HepG2 (cell line): ENCODE measurements at regions of chr11 and their contacts with region 1.

Region 1: DNA sequence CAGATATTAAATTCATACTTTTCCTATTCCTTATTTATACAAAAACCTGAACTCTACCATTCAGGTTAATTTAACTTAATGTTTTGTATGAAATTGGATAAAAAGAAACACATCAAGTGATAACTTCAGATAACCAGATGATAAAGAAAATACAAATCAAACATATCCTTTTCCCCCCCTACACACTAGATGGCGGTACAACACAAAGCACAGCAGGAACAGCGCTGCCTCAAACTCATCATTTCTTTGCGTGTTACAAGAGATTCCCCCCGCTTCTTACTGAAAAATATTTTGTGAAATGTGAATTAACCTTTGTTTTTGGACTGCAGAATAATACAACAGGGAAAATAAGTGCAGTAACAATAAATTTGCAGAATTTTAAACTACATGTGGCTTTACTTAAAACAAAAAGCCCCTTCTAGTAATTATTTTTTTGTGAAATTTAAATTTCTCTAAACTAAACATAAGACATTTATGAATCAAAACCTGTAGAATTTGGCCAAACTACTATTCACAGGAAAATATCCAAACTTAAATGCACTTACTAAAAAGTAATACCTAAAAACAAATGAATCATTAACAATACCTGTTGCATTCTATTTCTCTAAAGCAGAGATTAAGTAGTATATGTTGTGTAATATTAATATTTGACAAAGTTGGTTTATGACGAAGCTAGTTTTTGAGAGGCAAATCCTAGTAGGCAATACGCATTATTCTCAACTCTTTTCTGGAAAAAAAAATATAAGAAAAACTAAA is 74.4 kb downstream of the ARHGAP32 start:
- DNase-seq: peak; percentile 64
- ATAC-seq: peak; percentile 39; the same call in 1 of the 3 replicates
- H3K4me3 ChIP-seq: no peak overlapping the region
- H3K27ac ChIP-seq: no peak overlapping the region
- H3K4me1 ChIP-seq: peaks cover 40% of the 10 kb centered on the region
- H3K27me3 ChIP-seq: no peaks in the 10 kb centered on the region
- CTCF ChIP-seq: peak; percentile 87
- EP300 ChIP-seq: no peak
- POLR2A ChIP-seq: no peak
- RAD21 ChIP-seq: peak; percentile 83

Region 2: DNA sequence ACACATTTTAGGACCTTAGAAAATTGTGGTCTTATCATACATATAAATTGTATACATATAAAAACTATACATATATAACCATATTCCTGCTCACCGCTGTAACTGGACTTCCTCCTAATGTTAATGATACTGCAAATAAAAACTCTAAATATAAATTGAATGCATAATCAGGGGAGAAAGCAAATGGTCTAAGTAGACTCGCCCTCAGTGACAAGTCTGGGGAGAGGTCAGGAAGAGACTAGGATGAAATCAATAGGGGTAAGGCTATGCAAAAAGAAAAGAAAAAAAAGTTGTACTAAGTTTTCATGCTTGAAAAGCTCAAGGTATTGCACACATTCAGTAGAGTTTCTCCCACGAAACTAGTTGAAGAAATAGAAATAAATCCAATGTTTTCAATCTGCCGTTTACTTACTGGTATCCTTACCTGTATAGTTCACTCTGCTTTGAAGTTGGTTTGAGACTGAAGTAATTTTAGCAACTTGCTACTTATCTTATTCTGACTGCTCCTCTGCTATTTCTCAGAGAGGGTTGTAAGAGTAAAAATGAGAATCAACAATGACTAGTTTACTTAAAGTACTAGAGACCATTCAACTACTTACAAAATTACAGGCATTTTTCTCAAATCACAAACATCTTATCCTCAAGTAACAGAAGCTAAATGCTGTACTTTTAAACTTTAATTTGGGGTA is 86.5 kb after region 1 on chr11:
- CTCF ChIA-PET with region 1: no interaction called
- POLR2A ChIA-PET with region 1: no interaction called
- in situ Hi-C with region 1: no loop called
- intact Hi-C with region 1: loop called (anchors 5 kb)
- DNase-seq: no peak
- ATAC-seq: no peak
- H3K4me3 ChIP-seq: no peak overlapping the region
- H3K27ac ChIP-seq: no peak overlapping the region
- H3K4me1 ChIP-seq: peaks cover 16% of the 10 kb centered on the region
- H3K27me3 ChIP-seq: no peaks in the 10 kb centered on the region
- CTCF ChIP-seq: no peak
- EP300 ChIP-seq: no peak
- POLR2A ChIP-seq: no peak
- RAD21 ChIP-seq: no peak

Region 3: DNA sequence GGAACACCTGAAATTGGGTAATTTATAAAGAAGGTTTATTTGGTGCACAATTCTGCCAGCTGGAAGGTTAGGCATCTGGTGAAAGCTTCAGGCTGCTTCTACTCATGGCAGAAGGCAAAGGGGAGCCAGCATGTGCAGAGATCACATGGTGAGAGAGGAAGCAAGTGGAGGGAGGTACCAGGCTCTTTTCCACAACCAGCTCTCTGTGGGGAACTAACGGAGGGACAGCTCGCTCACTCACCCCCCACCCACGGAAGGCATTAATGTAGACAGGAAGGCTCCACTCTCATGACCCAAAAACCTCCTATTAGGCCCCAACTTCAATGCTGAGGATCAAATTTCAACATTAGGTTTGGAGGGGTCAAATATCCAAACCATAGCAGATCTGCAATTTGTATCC is 149.9 kb after region 1 on chr11:
- CTCF ChIA-PET with region 1: no interaction called
- POLR2A ChIA-PET with region 1: no interaction called
- in situ Hi-C with region 1: no loop called
- intact Hi-C with region 1: no loop called
- DNase-seq: no peak
- ATAC-seq: no peak
- H3K4me3 ChIP-seq: no peak overlapping the region
- H3K27ac ChIP-seq: no peak overlapping the region
- H3K4me1 ChIP-seq: peaks cover 28% of the 10 kb centered on the region
- H3K27me3 ChIP-seq: no peaks in the 10 kb centered on the region
- CTCF ChIP-seq: no peak
- EP300 ChIP-seq: no peak
- POLR2A ChIP-seq: no peak
- RAD21 ChIP-seq: no peak

Region 4: DNA sequence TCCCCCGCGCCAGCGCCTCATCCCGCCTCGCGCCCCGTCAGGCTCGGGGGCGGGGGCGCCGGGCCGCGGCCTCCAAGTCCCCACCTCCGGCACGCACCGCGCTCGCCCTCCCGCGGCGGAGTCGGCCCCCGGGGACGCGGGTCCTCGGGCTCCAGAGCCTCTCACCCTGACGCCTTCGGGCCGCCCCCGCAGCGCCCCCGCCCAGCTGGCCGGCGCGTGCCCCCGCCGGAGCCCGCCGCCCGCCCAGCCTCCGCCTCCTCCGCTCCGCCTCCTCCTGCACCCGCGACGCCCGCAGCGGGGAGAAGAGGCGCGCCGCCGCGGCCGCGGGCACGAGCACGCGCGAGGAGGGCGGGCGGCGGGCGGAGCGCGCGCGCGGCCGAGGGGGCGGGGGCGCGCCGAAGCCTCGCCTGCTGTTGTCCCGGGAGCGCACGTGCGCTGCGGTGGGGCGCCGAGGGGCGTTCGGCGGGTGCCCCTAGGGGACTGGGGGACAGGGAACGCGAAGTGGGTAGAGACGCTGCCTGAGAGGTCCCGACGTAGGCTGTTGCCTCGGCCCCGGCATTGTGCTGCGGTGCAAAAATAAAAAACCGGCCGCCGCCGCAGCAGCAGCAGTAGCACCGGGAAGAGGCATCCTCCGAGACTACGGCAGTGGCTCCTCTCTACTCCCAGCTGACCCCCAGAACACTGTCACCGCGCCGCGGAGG is 161.7 kb after region 1 on chr11:
- CTCF ChIA-PET with region 1: interaction called, 5 read pairs
- POLR2A ChIA-PET with region 1: no interaction called
- in situ Hi-C with region 1: no loop called
- intact Hi-C with region 1: loop called (anchors 2 kb)
- DNase-seq: peak; percentile 67
- ATAC-seq: peak; percentile 71
- H3K4me3 ChIP-seq: peak overlapping the region; percentile 76 to 82 (median 77)
- H3K27ac ChIP-seq: peak overlapping the region; percentile 21
- H3K4me1 ChIP-seq: peaks cover 81% of the 10 kb centered on the region
- H3K27me3 ChIP-seq: no peaks in the 10 kb centered on the region; a peak in 2 of 5 replicates
- CTCF ChIP-seq: peak; percentile 53; the same call in 1 of the 2 replicates
- EP300 ChIP-seq: no peak
- POLR2A ChIP-seq: peak; percentile 44 to 73; a peak in 3 of 4 replicates
- RAD21 ChIP-seq: peak; percentile 63

Region 5: DNA sequence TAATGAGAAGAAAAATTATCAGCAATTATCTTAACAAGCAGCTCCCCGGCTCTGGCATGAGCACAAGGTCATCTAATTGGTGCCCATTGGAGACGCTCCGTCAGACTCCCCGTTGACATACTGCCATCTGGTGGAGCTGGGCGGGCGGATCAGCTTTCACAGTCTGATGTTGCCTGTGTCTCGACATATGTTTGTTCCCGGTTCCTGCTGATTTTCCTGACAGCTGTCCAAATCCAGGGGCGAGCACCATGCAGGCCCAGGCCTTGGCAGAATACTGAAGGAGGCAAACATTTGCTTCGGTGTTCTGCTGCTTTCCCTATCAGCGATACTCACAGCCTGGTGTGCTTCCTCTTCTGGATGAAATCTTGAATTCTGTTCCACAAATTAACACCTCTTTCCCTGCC is 214.1 kb after region 1 on chr11:
- CTCF ChIA-PET with region 1: interaction called, 65 read pairs
- POLR2A ChIA-PET with region 1: no interaction called
- in situ Hi-C with region 1: loop called (anchors 5 kb)
- intact Hi-C with region 1: loop called (anchors 1 kb)
- DNase-seq: peak; percentile 73
- ATAC-seq: peak; percentile 96
- H3K4me3 ChIP-seq: peak overlapping the region in 1 of 3 experiments; percentile 32; a peak in 2 of 6 replicates
- H3K27ac ChIP-seq: no peak overlapping the region
- H3K4me1 ChIP-seq: peaks cover 14% of the 10 kb centered on the region
- H3K27me3 ChIP-seq: no peaks in the 10 kb centered on the region; a peak in 1 of 5 replicates
- CTCF ChIP-seq: peak; percentile 96
- EP300 ChIP-seq: no peak
- POLR2A ChIP-seq: no peak
- RAD21 ChIP-seq: peak; percentile 95